Sigmoid colon (tissue), 7 donors: ENCODE measurements at regions of chr11 and their contacts with region 1.

Region 1: DNA sequence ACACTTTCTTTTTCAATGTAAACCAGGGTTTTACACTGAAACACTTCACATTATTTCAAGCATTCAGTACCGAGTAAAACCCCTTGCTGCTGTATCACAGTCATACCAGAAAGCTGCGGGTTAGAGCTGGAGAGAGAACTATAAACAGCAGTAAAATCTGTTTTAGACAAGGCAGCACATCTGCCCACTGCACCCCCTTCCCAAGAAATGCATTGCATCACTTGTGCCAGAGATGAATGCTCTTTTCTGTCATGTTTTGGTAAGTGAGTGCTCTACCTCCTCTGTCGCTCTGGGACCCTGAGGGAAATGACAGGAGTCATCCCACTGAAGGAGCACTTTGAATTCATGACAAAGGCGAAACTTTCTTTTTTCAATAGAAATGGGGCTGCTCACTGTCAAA is 107.2 kb downstream of the MAML2 start:
- DNase-seq: no peak
- H3K4me3 ChIP-seq: no peak overlapping the region
- H3K27ac ChIP-seq: peak overlapping the region in 3 of 4 donors; percentile 24 to 70 (median 41)
- H3K4me1 ChIP-seq: peaks cover 0 to 51% (median 43%) of the 10 kb centered on the region in 4 donors
- H3K27me3 ChIP-seq: no peaks in the 10 kb centered on the region
- CTCF ChIP-seq: no peak
- EP300 ChIP-seq: no peak
- POLR2A ChIP-seq: no peak

Region 2: DNA sequence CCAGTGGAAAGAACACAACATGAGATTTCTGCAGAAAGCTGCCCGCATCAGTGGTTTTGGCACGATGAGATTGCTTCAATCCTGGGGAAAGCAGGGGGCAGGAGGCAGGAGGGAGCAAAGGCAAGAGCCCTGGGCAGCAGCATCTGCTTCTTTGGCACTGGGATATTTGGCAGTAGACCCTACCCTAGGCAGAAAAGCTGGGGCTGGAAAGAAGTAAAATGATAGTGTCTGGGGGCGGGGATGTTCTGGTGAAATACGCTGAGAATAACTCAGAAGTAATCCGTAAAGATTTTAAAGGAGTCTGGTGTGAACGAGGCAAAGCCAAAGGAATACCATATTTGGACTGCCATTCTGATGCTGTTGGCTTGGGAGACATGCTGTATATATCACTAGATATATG is 508.1 kb before region 1 on chr11:
- intact Hi-C with region 1: no loop called
- DNase-seq: no peak
- H3K4me3 ChIP-seq: no peak overlapping the region
- H3K27ac ChIP-seq: peak overlapping the region in 1 of 4 donors; percentile 54
- H3K4me1 ChIP-seq: peaks cover 0 to 20% (median 6%) of the 10 kb centered on the region in 4 donors
- H3K27me3 ChIP-seq: no peaks in the 10 kb centered on the region
- CTCF ChIP-seq: no peak
- EP300 ChIP-seq: no peak
- POLR2A ChIP-seq: no peak

Region 3: GRCh38 chr11:96054870-96055705 is 180.7 kb before region 1 on chr11:
- intact Hi-C with region 1: loop called (anchors 5 kb)
- DNase-seq: no peak
- H3K4me3 ChIP-seq: no peak overlapping the region
- H3K27ac ChIP-seq: peak overlapping the region in 1 of 4 donors; percentile 10
- H3K4me1 ChIP-seq: peaks cover 0 to 32% (median 17%) of the 10 kb centered on the region in 4 donors
- H3K27me3 ChIP-seq: no peaks in the 10 kb centered on the region
- CTCF ChIP-seq: peak; percentile 30 to 61 (median 54)
- EP300 ChIP-seq: no peak
- POLR2A ChIP-seq: no peak